Activated T-helper 2 cell treated with anti-CD3 and anti-CD28 coated beads, Interferon-gamma antibody, Interleukin-2, Interleukin-4, amounts not matched to agents 10 μg/mL and 5 μg/mL and 100 μg/mL, durations not matched to agents 14 hours and 24 hours and 36 hours (primary cell): ENCODE measurements at regions of chr22 and their contacts with region 1.

Region 1: GRCh38 chr22:41106122-41106968 is 14.0 kb downstream of the EP300 start:
- DNase-seq: no peak
- H3K4me3 Mint-ChIP-seq: no peak overlapping the region
- H3K27ac Mint-ChIP-seq: peak overlapping the region; percentile 85
- H3K4me1 Mint-ChIP-seq: peaks cover 27% of the 10 kb centered on the region
- H3K27me3 Mint-ChIP-seq: no peaks in the 10 kb centered on the region

Region 2: DNA sequence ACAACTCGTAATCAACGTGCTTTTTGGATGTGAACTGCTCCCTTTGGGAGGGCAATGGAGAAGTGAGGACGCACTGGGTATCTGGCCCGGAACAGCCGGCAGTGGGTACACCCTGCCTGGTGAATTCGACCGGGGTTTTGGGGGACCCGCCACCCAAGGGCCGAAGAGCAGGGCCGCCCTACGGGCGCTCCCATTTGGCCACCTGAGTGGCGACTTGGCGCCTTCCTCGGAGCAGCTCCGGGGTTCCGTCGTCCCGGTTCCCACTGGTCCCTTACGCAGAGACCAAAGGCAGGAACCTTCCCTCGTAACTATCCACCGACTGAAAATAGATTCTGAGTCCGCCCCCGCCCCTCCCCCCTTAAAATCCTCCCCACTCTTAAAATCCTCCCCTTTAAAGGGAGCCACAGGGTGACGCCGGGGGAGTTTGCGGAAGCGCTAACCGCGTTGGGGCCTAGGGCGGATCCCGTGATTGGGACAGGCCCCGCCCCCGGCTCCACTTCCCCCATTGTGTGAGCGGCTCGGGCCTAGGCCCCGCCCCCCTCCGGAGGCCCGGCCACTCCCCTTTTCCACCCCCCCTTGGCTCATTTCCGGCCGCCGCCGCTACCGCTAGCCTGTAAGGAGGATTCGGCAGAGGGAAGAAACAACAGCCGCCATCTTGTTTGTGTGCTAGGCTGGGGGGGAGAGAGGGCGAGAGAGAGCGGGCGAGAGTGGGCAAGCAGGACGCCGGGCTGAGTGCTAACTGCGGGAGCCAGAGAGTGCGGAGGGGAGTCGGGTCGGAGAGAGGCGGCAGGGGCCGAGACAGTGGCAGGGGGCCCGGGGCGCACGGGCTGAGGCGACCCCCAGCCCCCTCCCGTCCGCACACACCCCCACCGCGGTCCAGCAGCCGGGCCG is 15.0 kb before region 1 on chr22:
- intact Hi-C with region 1: loop called (anchors 2 kb)
- DNase-seq: peak; percentile 98
- H3K4me3 Mint-ChIP-seq: peak overlapping the region; percentile 96
- H3K27ac Mint-ChIP-seq: peak overlapping the region; percentile 100
- H3K4me1 Mint-ChIP-seq: peaks cover 27% of the 10 kb centered on the region
- H3K27me3 Mint-ChIP-seq: no peaks in the 10 kb centered on the region